ENCODE measurements at regions of chr5 and their contacts with region 1.

Region 1: DNA sequence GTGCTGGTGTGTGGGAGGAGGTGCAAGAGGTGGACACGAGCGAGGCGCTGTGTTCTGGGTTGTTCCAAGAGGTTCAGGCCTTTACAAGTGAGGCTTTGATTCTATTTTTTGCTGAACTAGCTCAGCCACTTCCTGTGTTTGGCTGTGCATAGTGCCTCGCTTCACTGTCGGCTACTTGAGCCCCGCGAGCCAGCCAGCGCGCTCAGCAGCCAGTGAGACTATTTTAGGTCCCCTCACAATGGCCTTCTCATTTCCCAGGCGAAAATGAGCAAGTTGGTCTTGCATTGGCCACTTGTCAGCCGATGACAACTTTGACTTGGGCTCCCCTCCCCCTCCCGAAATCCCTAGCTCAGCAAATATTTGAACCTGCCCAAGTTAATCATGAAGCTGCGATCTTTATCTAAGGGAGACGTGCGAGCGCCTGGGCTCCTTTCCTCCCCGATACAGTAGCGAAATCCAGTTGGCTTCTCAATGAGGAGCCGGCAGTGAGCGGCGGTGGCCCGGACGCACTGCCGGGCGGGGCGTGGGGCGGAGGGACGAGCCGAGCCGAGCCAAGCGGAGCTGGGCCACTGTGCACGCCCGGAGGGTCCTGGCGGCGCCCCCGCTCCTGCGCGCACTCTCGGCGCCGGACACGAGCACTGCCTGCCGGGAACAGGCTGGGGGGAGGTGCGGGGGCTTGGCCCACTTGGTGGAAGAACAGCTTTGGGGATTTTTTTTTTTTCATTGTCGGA is 72.6 kb downstream of the PIK3R1 start:
- DNase-seq: peak; percentile 70
- H3K4me3 ChIP-seq: peak overlapping the region; percentile 59
- H3K27ac ChIP-seq: peak overlapping the region; percentile 80
- H3K4me1 ChIP-seq: peaks cover 58% of the 10 kb centered on the region
- H3K27me3 ChIP-seq: no peaks in the 10 kb centered on the region
- CTCF ChIP-seq: no peak

Region 2: DNA sequence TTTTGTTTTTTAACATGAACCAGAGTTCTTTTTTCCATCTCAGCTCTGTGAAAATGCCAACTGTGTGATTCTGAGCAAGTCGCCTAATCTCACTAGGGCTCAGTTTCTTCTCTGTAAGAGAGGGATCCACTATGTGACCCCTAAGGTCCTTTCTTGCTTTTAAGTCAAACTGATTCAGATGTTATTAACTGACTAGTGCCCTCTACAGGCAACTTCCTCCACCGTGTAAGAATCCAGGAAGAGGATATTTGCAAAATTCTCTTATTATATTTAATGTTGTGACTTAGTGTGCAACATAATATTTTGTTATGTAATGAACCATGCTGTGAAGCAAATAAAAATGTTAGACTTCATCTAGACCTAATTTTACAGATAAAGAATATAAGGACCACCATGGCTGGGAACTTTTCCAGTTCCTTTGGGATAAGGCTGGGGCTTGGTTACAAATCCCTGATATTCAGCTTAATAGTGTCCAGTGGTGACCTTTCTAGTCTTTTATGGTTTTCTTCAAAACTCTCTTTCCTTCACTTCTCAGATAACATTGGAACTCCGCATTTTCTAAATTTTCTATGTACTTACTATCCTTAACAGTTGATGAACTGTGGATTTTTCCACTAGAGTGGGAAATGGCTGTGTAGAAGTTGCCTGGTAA is 172.1 kb after region 1 on chr5:
- CTCF ChIA-PET with region 1: interaction called, 3 read pairs
- POLR2A ChIA-PET with region 1: no interaction called
- intact Hi-C with region 1: loop called (anchors 1 kb)
- DNase-seq: peak; percentile 74
- H3K4me3 ChIP-seq: no peak overlapping the region
- H3K27ac ChIP-seq: no peak overlapping the region
- H3K4me1 ChIP-seq: peaks cover 11% of the 10 kb centered on the region
- H3K27me3 ChIP-seq: no peaks in the 10 kb centered on the region
- CTCF ChIP-seq: peak; percentile 87

Region 3: GRCh38 chr5:68661237-68661636 is 373.1 kb after region 1 on chr5:
- CTCF ChIA-PET with region 1: no interaction called
- POLR2A ChIA-PET with region 1: no interaction called
- intact Hi-C with region 1: loop called (anchors 5 kb)
- DNase-seq: peak; percentile 66
- H3K4me3 ChIP-seq: no peak overlapping the region
- H3K27ac ChIP-seq: no peak overlapping the region
- H3K4me1 ChIP-seq: peaks cover 11% of the 10 kb centered on the region
- H3K27me3 ChIP-seq: no peaks in the 10 kb centered on the region
- CTCF ChIP-seq: peak; percentile 61

Region 4: DNA sequence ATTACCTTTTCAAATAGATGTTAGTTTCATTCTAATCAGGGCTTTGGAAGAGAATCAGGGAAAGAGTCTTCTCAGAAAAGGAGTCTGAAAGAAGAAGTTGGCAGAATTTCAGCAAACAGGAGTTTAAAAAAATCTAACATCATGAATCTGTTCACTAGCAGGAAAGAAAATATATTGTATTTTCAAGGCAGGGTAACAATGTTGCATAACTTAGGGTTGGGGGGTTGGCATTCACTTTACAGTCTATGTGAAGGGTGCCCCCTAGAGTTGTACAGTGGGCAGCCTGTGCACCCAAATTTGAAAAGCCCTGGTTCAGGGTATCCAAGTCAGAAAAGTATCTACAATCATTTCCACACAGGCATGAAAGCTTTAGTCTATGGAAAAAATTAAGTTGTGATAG is 457.3 kb after region 1 on chr5:
- CTCF ChIA-PET with region 1: no interaction called
- POLR2A ChIA-PET with region 1: no interaction called
- intact Hi-C with region 1: loop called (anchors 1 kb)
- DNase-seq: peak; percentile 50
- H3K4me3 ChIP-seq: no peak overlapping the region
- H3K27ac ChIP-seq: no peak overlapping the region
- H3K4me1 ChIP-seq: no peaks in the 10 kb centered on the region
- H3K27me3 ChIP-seq: no peaks in the 10 kb centered on the region
- CTCF ChIP-seq: peak; percentile 67

Region 5: DNA sequence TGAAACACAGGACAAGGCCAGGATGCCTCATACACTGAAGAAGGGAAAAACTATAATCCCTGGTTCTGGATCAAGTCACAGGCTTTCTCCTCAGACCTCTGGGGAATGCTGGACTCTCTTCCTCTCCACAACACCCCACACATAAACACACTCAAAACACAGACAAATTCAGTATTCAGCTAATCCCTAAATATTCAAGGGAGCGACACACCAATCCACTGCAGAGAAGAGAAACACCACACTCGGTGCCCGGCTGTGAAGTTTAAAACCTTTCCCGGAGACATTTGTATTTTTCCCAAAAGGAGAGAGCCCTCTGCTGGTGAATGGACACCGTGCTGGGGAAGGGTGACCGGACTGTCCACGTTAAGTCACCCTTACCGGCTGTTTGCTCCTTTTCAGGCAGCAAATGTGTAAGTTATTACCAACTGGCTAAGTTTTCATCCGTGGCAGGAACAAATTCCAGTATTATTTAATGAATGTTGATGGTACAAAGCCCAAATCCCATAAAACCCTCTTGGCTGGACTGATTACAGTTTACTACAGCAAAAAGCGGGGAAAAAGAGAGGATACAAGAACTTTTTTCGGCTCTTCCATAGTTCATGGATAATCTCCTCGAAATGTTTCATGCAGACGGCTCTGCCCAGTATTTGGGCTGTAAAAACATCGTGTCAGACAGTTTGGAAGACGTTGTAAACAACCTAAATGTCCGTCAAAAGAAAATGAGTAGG is 674.8 kb after region 1 on chr5:
- CTCF ChIA-PET with region 1: no interaction called
- POLR2A ChIA-PET with region 1: no interaction called
- intact Hi-C with region 1: loop called (anchors 2 kb)
- DNase-seq: peak; percentile 71
- H3K4me3 ChIP-seq: no peak overlapping the region
- H3K27ac ChIP-seq: peak overlapping the region; percentile 27
- H3K4me1 ChIP-seq: peaks cover 5% of the 10 kb centered on the region
- H3K27me3 ChIP-seq: no peaks in the 10 kb centered on the region
- CTCF ChIP-seq: peak; percentile 91

Region 6: GRCh38 chr5:69007726-69008368 is 719.7 kb after region 1 on chr5:
- CTCF ChIA-PET with region 1: interaction called, 4 read pairs
- POLR2A ChIA-PET with region 1: no interaction called
- intact Hi-C with region 1: loop called (anchors 5 kb)
- DNase-seq: peak; percentile 72
- H3K4me3 ChIP-seq: no peak overlapping the region
- H3K27ac ChIP-seq: no peak overlapping the region
- H3K4me1 ChIP-seq: peaks cover 8% of the 10 kb centered on the region
- H3K27me3 ChIP-seq: no peaks in the 10 kb centered on the region
- CTCF ChIP-seq: peak; percentile 93

Measured in A673 (cell line).